PC-3 (cell line): ENCODE measurements at regions of chr5 and their contacts with region 1.

Region 1: GRCh38 chr5:135191084-135191826 is 157.2 kb upstream of the PITX1 start:
- DNase-seq: peak; percentile 83
- ATAC-seq: peak; percentile 91
- H3K4me3 ChIP-seq: peak overlapping the region; percentile 69
- H3K27ac ChIP-seq: no peak overlapping the region
- H3K4me1 ChIP-seq: peaks cover 23% of the 10 kb centered on the region
- H3K27me3 ChIP-seq: no peaks in the 10 kb centered on the region
- CTCF ChIP-seq: peak; percentile 84

Region 2: DNA sequence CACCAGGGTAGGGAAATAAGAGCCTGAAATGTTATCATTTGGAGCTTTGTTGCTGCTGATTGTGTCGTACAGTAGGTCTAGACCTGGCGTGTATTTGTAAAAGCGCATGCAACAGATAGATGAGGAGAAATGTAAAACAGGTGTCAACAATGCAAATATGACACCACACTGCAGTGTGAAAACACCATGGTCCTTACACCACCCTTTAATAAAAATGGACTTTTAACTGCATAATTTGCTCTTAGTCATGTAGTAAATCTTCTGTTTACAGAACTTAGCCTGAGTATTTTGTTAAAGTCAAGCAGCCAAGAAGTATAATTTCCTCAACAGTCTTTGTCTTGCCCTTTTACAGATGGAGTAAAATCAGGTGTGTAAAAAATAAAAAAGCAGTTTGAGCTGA is 272.4 kb before region 1 on chr5:
- CTCF ChIA-PET with region 1: interaction called, 3 read pairs
- POLR2A ChIA-PET with region 1: no interaction called
- intact Hi-C with region 1: loop called (anchors 2 kb)
- DNase-seq: no peak
- ATAC-seq: peak; percentile 54
- H3K4me3 ChIP-seq: no peak overlapping the region
- H3K27ac ChIP-seq: no peak overlapping the region
- H3K4me1 ChIP-seq: no peaks in the 10 kb centered on the region
- H3K27me3 ChIP-seq: no peaks in the 10 kb centered on the region
- CTCF ChIP-seq: no peak

Region 3: GRCh38 chr5:135010502-135011354 is 180.5 kb before region 1 on chr5:
- CTCF ChIA-PET with region 1: no interaction called
- POLR2A ChIA-PET with region 1: no interaction called
- intact Hi-C with region 1: loop called (anchors 1 kb)
- DNase-seq: peak; percentile 16
- ATAC-seq: peak; percentile 59
- H3K4me3 ChIP-seq: no peak overlapping the region
- H3K27ac ChIP-seq: no peak overlapping the region
- H3K4me1 ChIP-seq: no peaks in the 10 kb centered on the region
- H3K27me3 ChIP-seq: no peaks in the 10 kb centered on the region
- CTCF ChIP-seq: peak; percentile 48

Region 4: GRCh38 chr5:135034236-135034962 is 156.9 kb before region 1 on chr5:
- CTCF ChIA-PET with region 1: no interaction called
- POLR2A ChIA-PET with region 1: no interaction called
- intact Hi-C with region 1: loop called (anchors 5 kb)
- DNase-seq: peak; percentile 65
- ATAC-seq: peak; percentile 66
- H3K4me3 ChIP-seq: peak overlapping the region; percentile 99
- H3K27ac ChIP-seq: peak overlapping the region; percentile 78
- H3K4me1 ChIP-seq: peaks cover 13% of the 10 kb centered on the region
- H3K27me3 ChIP-seq: no peaks in the 10 kb centered on the region
- CTCF ChIP-seq: no peak

Region 5: GRCh38 chr5:135332519-135333150 is 141.4 kb after region 1 on chr5:
- CTCF ChIA-PET with region 1: no interaction called
- POLR2A ChIA-PET with region 1: no interaction called
- intact Hi-C with region 1: loop called (anchors 1 kb)
- DNase-seq: peak; percentile 80
- ATAC-seq: peak; percentile 63
- H3K4me3 ChIP-seq: no peak overlapping the region
- H3K27ac ChIP-seq: no peak overlapping the region
- H3K4me1 ChIP-seq: no peaks in the 10 kb centered on the region
- H3K27me3 ChIP-seq: no peaks in the 10 kb centered on the region
- CTCF ChIP-seq: peak; percentile 70